Panc1 (cell line): ENCODE measurements at regions of chr1 and their contacts with region 1.

Region 1: GRCh38 chr1:58220836-58221472 is 325.6 kb downstream of the OMA1 start:
- DNase-seq: no peak
- ATAC-seq: no peak
- H3K4me3 ChIP-seq: no peak overlapping the region
- H3K27ac ChIP-seq: no peak overlapping the region
- H3K4me1 ChIP-seq: no peaks in the 10 kb centered on the region
- H3K27me3 ChIP-seq: no peaks in the 10 kb centered on the region
- CTCF ChIP-seq: no peak

Region 2: GRCh38 chr1:59499273-59499942 is 1278.5 kb after region 1 on chr1:
- CTCF ChIA-PET with region 1: interaction called, 11 read pairs
- POLR2A ChIA-PET with region 1: no interaction called
- in situ Hi-C with region 1: no loop called
- intact Hi-C with region 1: no loop called
- DNase-seq: no peak
- ATAC-seq: no peak
- H3K4me3 ChIP-seq: no peak overlapping the region
- H3K27ac ChIP-seq: no peak overlapping the region
- H3K4me1 ChIP-seq: no peaks in the 10 kb centered on the region
- H3K27me3 ChIP-seq: no peaks in the 10 kb centered on the region
- CTCF ChIP-seq: no peak